Endothelial cell of umbilical vein (primary cell): ENCODE measurements at regions of chr2 and their contacts with region 1.

Region 1: GRCh38 chr2:175861958-175862357 is 140.1 kb downstream of the LNPK start:
- DNase-seq: no peak
- H3K4me3 ChIP-seq: no peak overlapping the region
- H3K27ac ChIP-seq: no peak overlapping the region
- H3K4me1 ChIP-seq: no peaks in the 10 kb centered on the region
- H3K27me3 ChIP-seq: no peaks in the 10 kb centered on the region
- CTCF ChIP-seq: no peak
- POLR2A ChIP-seq: no peak

Region 2: DNA sequence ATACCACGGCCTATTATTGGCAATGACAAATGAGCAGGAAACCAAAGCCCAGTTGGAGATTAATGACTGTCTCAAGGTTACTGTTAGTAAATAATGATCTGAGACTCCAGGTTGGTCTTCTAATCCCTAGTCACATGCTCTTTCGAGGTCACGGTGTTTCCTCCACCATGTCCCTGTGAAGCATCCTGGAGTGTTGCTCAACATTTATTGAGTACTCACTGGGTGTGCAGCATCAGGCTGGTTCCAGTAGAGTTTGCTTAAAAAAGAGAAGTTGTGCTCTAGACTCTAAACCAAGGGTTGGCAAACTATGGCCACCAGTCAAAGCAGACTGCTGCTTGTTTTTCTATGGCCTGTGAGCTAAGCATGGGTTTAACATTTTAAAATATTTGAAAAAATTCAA is 416.7 kb before region 1 on chr2:
- CTCF ChIA-PET with region 1: no interaction called
- POLR2A ChIA-PET with region 1: no interaction called
- dilution Hi-C with region 1: no loop called
- intact Hi-C with region 1: no loop called
- DNase-seq: no peak
- H3K4me3 ChIP-seq: no peak overlapping the region
- H3K27ac ChIP-seq: no peak overlapping the region
- H3K4me1 ChIP-seq: no peaks in the 10 kb centered on the region
- H3K27me3 ChIP-seq: no peaks in the 10 kb centered on the region
- CTCF ChIP-seq: no peak
- POLR2A ChIP-seq: no peak

Region 3: GRCh38 chr2:175829741-175830140 is 32.2 kb before region 1 on chr2:
- CTCF ChIA-PET with region 1: no interaction called
- POLR2A ChIA-PET with region 1: no interaction called
- dilution Hi-C with region 1: no loop called
- intact Hi-C with region 1: loop called (anchors 1 kb)
- DNase-seq: no peak
- H3K4me3 ChIP-seq: no peak overlapping the region
- H3K27ac ChIP-seq: no peak overlapping the region
- H3K4me1 ChIP-seq: no peaks in the 10 kb centered on the region
- H3K27me3 ChIP-seq: peaks cover 0 to 2% of the 10 kb centered on the region in 2 experiments
- CTCF ChIP-seq: no peak
- POLR2A ChIP-seq: no peak